ENCODE measurements at regions of chr15 and their contacts with region 1.

Region 1: GRCh38 chr15:90931737-90932659 is at the start of gene HDDC3:
- DNase-seq: peak; percentile 93
- H3K4me3 Mint-ChIP-seq: peak within 1 kb of the TSS; percentile 95
- H3K27ac Mint-ChIP-seq: peak within 1 kb of the TSS; percentile 96
- H3K4me1 Mint-ChIP-seq: peaks cover 35% of the 10 kb centered on the region
- H3K27me3 Mint-ChIP-seq: no peaks in the 10 kb centered on the region
- CTCF ChIP-seq: peak; percentile 87
- total RNA-seq, gene HDDC3: 23.6 and 25.5 TPM in 2 replicates

Region 2: GRCh38 chr15:90869601-90870353 is 62.2 kb before region 1 on chr15:
- CTCF ChIA-PET with region 1: interaction called, 7 read pairs
- POLR2A ChIA-PET with region 1: interaction called, 29 read pairs
- intact Hi-C with region 1: no loop called
- DNase-seq: peak; percentile 95
- H3K4me3 Mint-ChIP-seq: peak overlapping the region; percentile 76
- H3K27ac Mint-ChIP-seq: peak overlapping the region; percentile 89
- H3K4me1 Mint-ChIP-seq: peaks cover 40% of the 10 kb centered on the region
- H3K27me3 Mint-ChIP-seq: no peaks in the 10 kb centered on the region
- CTCF ChIP-seq: no peak

Region 3: GRCh38 chr15:90907838-90908507 is 24.0 kb before region 1 on chr15:
- CTCF ChIA-PET with region 1: interaction called, 131 read pairs
- POLR2A ChIA-PET with region 1: interaction called, 150 read pairs
- intact Hi-C with region 1: no loop called
- DNase-seq: no peak
- H3K4me3 Mint-ChIP-seq: no peak overlapping the region
- H3K27ac Mint-ChIP-seq: no peak overlapping the region
- H3K4me1 Mint-ChIP-seq: no peaks in the 10 kb centered on the region
- H3K27me3 Mint-ChIP-seq: no peaks in the 10 kb centered on the region
- CTCF ChIP-seq: no peak

Region 4: DNA sequence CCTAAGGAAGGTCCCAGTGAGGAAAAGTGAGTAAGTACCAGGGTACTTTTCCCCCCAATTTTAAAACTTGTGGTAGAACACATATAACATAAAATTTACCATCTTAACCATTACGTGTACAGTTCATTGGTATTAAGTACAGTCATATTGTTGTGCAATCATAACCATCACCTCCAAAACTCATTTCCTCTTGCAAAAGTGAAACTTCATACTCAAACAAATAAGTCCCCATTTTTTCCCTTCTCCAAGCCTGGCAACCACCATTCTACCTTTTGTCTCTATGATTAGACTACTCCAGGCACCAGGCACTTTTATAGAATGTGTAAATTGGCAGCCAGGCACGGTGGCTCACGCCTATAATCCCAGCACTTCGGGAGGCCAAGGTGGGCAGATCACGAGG is 50.1 kb after region 1 on chr15:
- CTCF ChIA-PET with region 1: interaction called, 5 read pairs
- POLR2A ChIA-PET with region 1: interaction called, 20 read pairs
- intact Hi-C with region 1: no loop called
- DNase-seq: peak; percentile 44
- H3K4me3 Mint-ChIP-seq: no peak overlapping the region
- H3K27ac Mint-ChIP-seq: peak overlapping the region; percentile 53
- H3K4me1 Mint-ChIP-seq: peaks cover 5% of the 10 kb centered on the region
- H3K27me3 Mint-ChIP-seq: no peaks in the 10 kb centered on the region
- CTCF ChIP-seq: no peak

Region 5: DNA sequence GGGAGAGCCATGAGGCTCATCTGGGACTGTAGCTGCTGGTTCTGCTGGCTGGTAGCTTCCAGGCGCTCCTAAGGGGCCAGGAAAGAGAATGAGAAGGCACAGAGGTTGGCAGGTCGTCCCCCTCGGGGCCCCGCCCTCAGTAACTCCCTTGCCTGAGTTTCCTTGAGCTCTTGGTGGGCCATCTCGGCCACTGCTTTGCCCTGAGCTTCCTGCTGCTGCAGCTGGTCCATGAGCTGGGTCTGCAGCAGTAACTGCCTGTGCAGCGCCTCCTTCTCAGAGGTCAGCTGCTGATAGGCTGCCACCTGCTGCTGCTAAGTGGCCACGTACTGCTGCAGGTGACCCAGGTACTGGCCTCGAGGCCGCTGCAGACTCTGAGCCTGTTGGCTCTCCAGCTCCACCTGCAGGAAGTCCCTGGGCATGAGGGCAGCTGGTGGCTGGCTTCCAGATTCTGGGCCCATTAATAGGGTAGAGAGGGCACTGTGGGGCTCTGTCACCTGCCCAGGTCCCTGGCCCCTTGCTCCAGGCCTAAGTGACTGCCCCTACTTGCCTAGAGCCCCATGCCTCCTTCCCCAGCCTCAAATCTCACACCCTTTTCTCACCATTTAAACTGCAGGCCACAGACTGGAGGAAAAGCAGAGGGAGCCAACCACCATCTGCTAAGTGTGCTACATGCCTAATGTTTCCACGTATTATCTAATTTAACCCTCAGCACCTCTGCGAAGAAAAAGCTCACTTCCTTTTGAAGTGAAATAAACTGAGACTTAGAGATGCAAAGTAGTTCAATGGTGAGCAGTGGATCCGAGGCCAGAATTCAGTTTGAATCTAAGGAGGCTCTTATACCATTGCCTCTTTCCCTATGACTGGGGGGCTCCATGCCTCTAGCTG is 101.2 kb after region 1 on chr15:
- CTCF ChIA-PET with region 1: interaction called, 5 read pairs
- POLR2A ChIA-PET with region 1: no interaction called
- intact Hi-C with region 1: loop called (anchors 2 kb)
- DNase-seq: peak; percentile 80
- H3K4me3 Mint-ChIP-seq: no peak overlapping the region
- H3K27ac Mint-ChIP-seq: no peak overlapping the region
- H3K4me1 Mint-ChIP-seq: no peaks in the 10 kb centered on the region
- H3K27me3 Mint-ChIP-seq: peaks cover 26% of the 10 kb centered on the region
- CTCF ChIP-seq: peak; percentile 80